Naive thymus-derived CD8-positive, alpha-beta T cell (primary cell): ENCODE measurements at regions of chr1 and their contacts with region 1.

Region 1: GRCh38 chr1:174999216-174999925 is 376 bp upstream of the CACYBP start:
- DNase-seq: peak; percentile 97 to 99 (median 98)
- ATAC-seq: peak; percentile 76 to 79
- H3K4me3 Mint-ChIP-seq: no peak overlapping the region
- H3K27ac Mint-ChIP-seq: no peak overlapping the region
- H3K4me1 Mint-ChIP-seq: peaks cover 21 to 48% (median 38%) of the 10 kb centered on the region in 4 donors
- H3K27me3 Mint-ChIP-seq: no peaks in the 10 kb centered on the region

Region 2: DNA sequence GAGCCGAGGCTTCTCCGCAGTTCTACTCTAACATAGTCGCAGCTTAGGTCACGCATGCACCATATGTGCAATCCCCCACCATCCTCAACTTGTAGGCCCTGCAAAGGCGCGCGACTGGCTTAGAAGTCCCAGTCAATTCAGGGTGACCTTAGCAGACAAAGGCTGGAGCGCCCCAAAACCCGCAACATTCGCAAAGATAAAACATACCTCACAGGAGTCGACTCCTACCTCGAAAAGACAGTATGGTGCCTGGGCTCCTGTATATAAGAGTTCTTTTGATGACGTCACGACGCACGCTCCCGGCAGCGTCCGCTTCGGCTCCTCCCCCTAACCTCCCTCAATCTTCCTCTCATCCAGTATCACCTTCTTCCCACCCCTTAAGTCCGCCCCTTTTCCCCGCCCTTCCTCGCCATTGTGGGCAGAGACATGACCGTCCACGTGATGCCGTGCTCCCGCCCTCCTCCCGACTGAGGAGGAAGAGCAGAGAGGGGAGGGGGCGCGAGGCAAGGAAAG is 1131.6 kb before region 1 on chr1 and contains the start of gene GAS5:
- POLR2A ChIA-PET with region 1: interaction called, 18 read pairs
- DNase-seq: peak; percentile 90 to 100 (median 99)
- ATAC-seq: peak; percentile 75 to 79
- H3K4me3 Mint-ChIP-seq: peak within 1 kb of the TSS; percentile 87 to 99 (median 97)
- H3K27ac Mint-ChIP-seq: peak within 1 kb of the TSS; percentile 95 to 99 (median 98)
- H3K4me1 Mint-ChIP-seq: peaks cover 29 to 82% (median 74%) of the 10 kb centered on the region in 4 donors
- H3K27me3 Mint-ChIP-seq: no peaks in the 10 kb centered on the region
- polyA plus RNA-seq, gene GAS5: 503 to 660 (median 547) TPM

Region 3: GRCh38 chr1:174700775-174701174 is 298.6 kb before region 1 on chr1:
- POLR2A ChIA-PET with region 1: no interaction called
- DNase-seq: no peak
- ATAC-seq: no peak
- H3K4me3 Mint-ChIP-seq: no peak overlapping the region
- H3K27ac Mint-ChIP-seq: no peak overlapping the region
- H3K4me1 Mint-ChIP-seq: peaks cover 0 to 1% (median 0%) of the 10 kb centered on the region in 4 donors
- H3K27me3 Mint-ChIP-seq: no peaks in the 10 kb centered on the region

Region 4: DNA sequence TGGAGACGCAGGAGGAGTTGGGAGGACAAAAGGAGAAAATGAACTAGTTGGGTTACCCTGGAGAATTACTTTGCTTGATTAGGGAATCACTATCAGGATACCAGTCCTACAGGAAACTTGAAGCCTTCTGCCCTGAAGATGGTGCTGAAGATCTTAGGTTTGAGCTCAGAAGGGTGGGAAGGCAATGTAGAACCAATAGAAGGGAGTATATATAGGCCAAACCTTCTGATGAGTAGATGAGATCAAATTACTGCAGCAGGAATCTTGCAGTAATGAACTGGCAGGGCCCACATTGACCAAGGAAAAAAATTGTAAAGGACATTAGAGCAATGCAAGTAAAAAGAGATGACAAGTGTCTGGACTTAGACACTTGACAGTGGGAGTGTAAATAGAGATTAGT is 116.0 kb before region 1 on chr1:
- POLR2A ChIA-PET with region 1: interaction called, 18 read pairs
- DNase-seq: peak in 3 of 10 donors; percentile 2 to 17 (median 11)
- ATAC-seq: peak; percentile 40 to 70
- H3K4me3 Mint-ChIP-seq: no peak overlapping the region
- H3K27ac Mint-ChIP-seq: peak overlapping the region in 2 of 10 donors; percentile 1 to 9
- H3K4me1 Mint-ChIP-seq: peaks cover 0 to 12% (median 6%) of the 10 kb centered on the region in 4 donors
- H3K27me3 Mint-ChIP-seq: no peaks in the 10 kb centered on the region

Region 5: GRCh38 chr1:174968750-174969244 is 30.6 kb before region 1 on chr1:
- POLR2A ChIA-PET with region 1: interaction called, 204 read pairs
- DNase-seq: peak in 8 of 10 donors; percentile 32 to 89 (median 66)
- ATAC-seq: peak; percentile 65 to 73
- H3K4me3 Mint-ChIP-seq: peak overlapping the region; percentile 57 to 79 (median 69)
- H3K27ac Mint-ChIP-seq: peak overlapping the region; percentile 90 to 98 (median 95)
- H3K4me1 Mint-ChIP-seq: peaks cover 35 to 81% (median 74%) of the 10 kb centered on the region in 4 donors
- H3K27me3 Mint-ChIP-seq: no peaks in the 10 kb centered on the region

Region 6: GRCh38 chr1:175015243-175015642 is 15.9 kb after region 1 on chr1:
- POLR2A ChIA-PET with region 1: interaction called, 22 read pairs
- DNase-seq: no peak
- ATAC-seq: no peak
- H3K4me3 Mint-ChIP-seq: no peak overlapping the region
- H3K27ac Mint-ChIP-seq: peak overlapping the region in 7 of 10 donors; percentile 6 to 83 (median 50)
- H3K4me1 Mint-ChIP-seq: peaks cover 6 to 15% (median 7%) of the 10 kb centered on the region in 4 donors
- H3K27me3 Mint-ChIP-seq: no peaks in the 10 kb centered on the region